GM12878 (cell line): ENCODE measurements at regions of chrX and their contacts with region 1.

Region 1: GRCh38 chrX:46796574-46797191 is 37.8 kb upstream of the SLC9A7 start:
- DNase-seq: no peak
- ATAC-seq: peak; percentile 80
- H3K4me3 ChIP-seq: no peak overlapping the region
- H3K27ac ChIP-seq: no peak overlapping the region
- H3K4me1 ChIP-seq: peaks cover 20% of the 10 kb centered on the region
- H3K27me3 ChIP-seq: no peaks in the 10 kb centered on the region
- CTCF ChIP-seq: peak; percentile 88 to 93 (median 90)
- EP300 ChIP-seq: no peak
- POLR2A ChIP-seq: no peak
- RAD21 ChIP-seq: peak; percentile 93

Region 2: GRCh38 chrX:46554942-46555341 is 241.7 kb before region 1 on chrX:
- CTCF ChIA-PET with region 1: interaction called, 42 read pairs
- POLR2A ChIA-PET with region 1: no interaction called
- RAD21 ChIA-PET with region 1: interaction called, 14 read pairs
- SMC1A ChIA-PET with region 1: interaction called, 16 read pairs
- in situ Hi-C with region 1: loop called (anchors 10 kb)
- intact Hi-C with region 1: loop called (anchors 2 kb)
- DNase-seq: no peak
- ATAC-seq: peak; percentile 54
- H3K4me3 ChIP-seq: no peak overlapping the region
- H3K27ac ChIP-seq: no peak overlapping the region
- H3K4me1 ChIP-seq: no peaks in the 10 kb centered on the region
- H3K27me3 ChIP-seq: no peaks in the 10 kb centered on the region
- CTCF ChIP-seq: peak in 2 of 3 experiments; percentile 18 to 52; a peak in 2 of 6 replicates
- EP300 ChIP-seq: no peak
- POLR2A ChIP-seq: no peak
- RAD21 ChIP-seq: peak; percentile 55; the same call in 1 of the 2 replicates

Region 3: GRCh38 chrX:46642145-46642544 is 154.5 kb before region 1 on chrX:
- CTCF ChIA-PET with region 1: interaction called, 26 read pairs
- POLR2A ChIA-PET with region 1: no interaction called
- RAD21 ChIA-PET with region 1: interaction called, 9 read pairs
- SMC1A ChIA-PET with region 1: interaction called, 6 read pairs
- in situ Hi-C with region 1: no loop called
- intact Hi-C with region 1: loop called (anchors 2 kb)
- DNase-seq: no peak
- ATAC-seq: peak; percentile 69
- H3K4me3 ChIP-seq: no peak overlapping the region
- H3K27ac ChIP-seq: no peak overlapping the region
- H3K4me1 ChIP-seq: peaks cover 9% of the 10 kb centered on the region
- H3K27me3 ChIP-seq: no peaks in the 10 kb centered on the region
- CTCF ChIP-seq: peak; percentile 24 to 50 (median 39); a peak in 5 of 6 replicates
- EP300 ChIP-seq: no peak
- POLR2A ChIP-seq: no peak
- RAD21 ChIP-seq: peak; percentile 52; the same call in 1 of the 2 replicates

Region 4: GRCh38 chrX:46693149-46693548 is 103.5 kb before region 1 on chrX:
- CTCF ChIA-PET with region 1: interaction called, 23 read pairs
- POLR2A ChIA-PET with region 1: no interaction called
- RAD21 ChIA-PET with region 1: interaction called, 3 read pairs
- SMC1A ChIA-PET with region 1: interaction called, 6 read pairs
- in situ Hi-C with region 1: no loop called
- intact Hi-C with region 1: no loop called
- DNase-seq: peak; percentile 62
- ATAC-seq: peak; percentile 92
- H3K4me3 ChIP-seq: no peak overlapping the region
- H3K27ac ChIP-seq: peak overlapping the region; percentile 30; the same call in 1 of the 2 replicates
- H3K4me1 ChIP-seq: peaks cover 23% of the 10 kb centered on the region
- H3K27me3 ChIP-seq: no peaks in the 10 kb centered on the region
- CTCF ChIP-seq: no peak
- EP300 ChIP-seq: peak; percentile 10 to 71; a peak in 3 of 4 replicates
- POLR2A ChIP-seq: no peak
- RAD21 ChIP-seq: no peak

Region 5: DNA sequence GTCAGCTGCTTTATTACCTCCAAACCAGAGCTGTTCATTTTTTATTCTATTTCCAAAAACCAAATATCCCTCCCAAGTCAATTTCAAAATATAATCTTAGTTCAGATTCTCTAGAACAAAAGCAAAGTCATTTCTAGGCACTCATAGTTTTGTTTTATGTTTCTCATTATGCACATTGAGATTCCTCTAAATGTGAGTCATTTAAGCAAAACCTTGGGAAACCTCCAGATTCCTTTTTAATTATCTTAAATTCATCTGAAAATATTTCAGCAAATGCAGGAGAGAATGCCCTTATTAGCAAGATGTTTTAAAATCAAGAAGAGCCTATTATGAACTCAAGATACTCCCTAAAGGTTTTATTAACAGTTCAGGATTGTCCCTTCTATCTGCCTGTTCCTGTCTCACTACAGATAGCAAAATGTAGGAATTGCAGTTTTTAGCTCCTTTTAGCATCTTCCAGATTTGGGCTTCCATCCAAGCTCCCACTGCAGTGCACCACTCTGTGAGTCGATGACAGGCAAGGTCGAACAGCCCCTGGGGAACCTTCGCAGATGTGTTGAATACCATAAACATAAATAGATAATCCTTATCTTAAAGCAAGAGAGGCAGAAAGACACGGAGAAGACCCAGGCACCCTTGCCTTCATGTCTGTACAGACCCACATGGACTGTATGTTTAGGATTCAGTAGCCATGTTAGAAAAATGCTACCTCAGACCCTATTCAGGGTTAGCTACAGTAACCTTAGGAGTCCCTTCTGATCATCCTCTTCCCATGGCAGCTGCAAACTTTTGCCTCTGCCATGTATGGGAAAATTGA is 26.5 kb before region 1 on chrX:
- CTCF ChIA-PET with region 1: interaction called, 17 read pairs
- POLR2A ChIA-PET with region 1: no interaction called
- RAD21 ChIA-PET with region 1: interaction called, 3 read pairs
- SMC1A ChIA-PET with region 1: interaction called, 4 read pairs
- in situ Hi-C with region 1: no loop called
- intact Hi-C with region 1: no loop called
- DNase-seq: no peak
- ATAC-seq: no peak
- H3K4me3 ChIP-seq: no peak overlapping the region
- H3K27ac ChIP-seq: no peak overlapping the region
- H3K4me1 ChIP-seq: no peaks in the 10 kb centered on the region
- H3K27me3 ChIP-seq: 0 out of 4 replicates have a peak, but pooled peaks cover 0 to 3% of the 10 kb centered on the region in 2 experiments
- CTCF ChIP-seq: no peak
- EP300 ChIP-seq: no peak
- POLR2A ChIP-seq: no peak
- RAD21 ChIP-seq: no peak

Region 6: GRCh38 chrX:47658684-47659515 is 862.2 kb after region 1 on chrX and contains the start of gene UXT:
- CTCF ChIA-PET with region 1: no interaction called
- POLR2A ChIA-PET with region 1: no interaction called
- RAD21 ChIA-PET with region 1: no interaction called
- SMC1A ChIA-PET with region 1: no interaction called
- in situ Hi-C with region 1: no loop called
- intact Hi-C with region 1: no loop called
- DNase-seq: peak; percentile 74
- ATAC-seq: peak; percentile 96
- H3K4me3 ChIP-seq: peak within 1 kb of the TSS; percentile 70
- H3K27ac ChIP-seq: peak within 1 kb of the TSS; percentile 86
- H3K4me1 ChIP-seq: no peaks in the 10 kb centered on the region
- H3K27me3 ChIP-seq: no peaks in the 10 kb centered on the region
- CTCF ChIP-seq: no peak
- EP300 ChIP-seq: 0 out of 4 replicates have a peak, but pooled peaks of 1 of the 2 experiments have one; percentile 9
- POLR2A ChIP-seq: peak; percentile 94; the same call in 1 of the 2 replicates
- RAD21 ChIP-seq: no peak
- polyA plus RNA-seq, gene UXT: 105 to 204 TPM